ENCODE measurements at regions of chr17 and their contacts with region 1.

Region 1: DNA sequence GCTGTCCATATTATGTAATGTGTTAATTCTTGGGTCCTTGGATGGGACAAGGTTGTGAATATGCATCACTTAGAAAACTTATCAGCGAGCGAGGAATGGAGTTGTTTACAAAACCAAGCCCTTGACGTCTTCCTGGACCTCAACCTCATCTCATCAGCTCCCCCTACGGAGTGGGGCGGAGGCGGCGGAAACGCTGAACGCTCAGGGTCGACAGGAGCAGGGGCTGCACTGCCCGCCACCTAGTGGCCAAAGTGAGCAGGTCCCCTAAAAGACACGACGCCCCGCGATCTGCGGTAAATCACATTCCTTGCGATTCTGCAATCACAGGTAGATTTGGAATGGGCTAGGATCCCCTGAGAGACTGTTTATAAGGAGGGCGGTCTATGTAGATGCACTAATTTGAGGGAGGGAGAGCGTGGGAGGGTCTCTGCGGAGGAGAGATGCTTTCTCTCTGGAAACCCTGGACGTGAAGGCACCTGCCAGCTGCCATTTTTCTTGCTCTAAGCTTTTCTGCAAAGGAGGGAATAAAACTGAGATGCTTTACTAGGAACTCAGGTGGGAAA is 5.4 kb upstream of the ICAM2 start:
- DNase-seq: peak; percentile 92
- ATAC-seq: peak; percentile 97
- H3K4me3 Mint-ChIP-seq: peak overlapping the region; percentile 48
- H3K27ac Mint-ChIP-seq: no peak overlapping the region
- H3K4me1 Mint-ChIP-seq: peaks cover 3% of the 10 kb centered on the region; the same call in 1 of the 2 replicates
- H3K27me3 Mint-ChIP-seq: peaks cover 13% of the 10 kb centered on the region
- CTCF ChIP-seq: peak; percentile 96

Region 2: GRCh38 chr17:63919311-63919723 is 106.5 kb before region 1 on chr17:
- CTCF ChIA-PET with region 1: interaction called, 74 read pairs
- POLR2A ChIA-PET with region 1: interaction called, 3 read pairs
- DNase-seq: peak; percentile 81
- ATAC-seq: peak; percentile 95
- H3K4me3 Mint-ChIP-seq: peak overlapping the region; percentile 46; the same call in 1 of the 2 replicates
- H3K27ac Mint-ChIP-seq: no peak overlapping the region
- H3K4me1 Mint-ChIP-seq: peaks cover 16% of the 10 kb centered on the region
- H3K27me3 Mint-ChIP-seq: peaks cover 3% of the 10 kb centered on the region; the same call in 1 of the 2 replicates
- CTCF ChIP-seq: peak; percentile 97

Region 3: GRCh38 chr17:63984651-63985386 is 41.0 kb before region 1 on chr17:
- CTCF ChIA-PET with region 1: interaction called, 16 read pairs
- POLR2A ChIA-PET with region 1: no interaction called
- DNase-seq: no peak
- ATAC-seq: no peak
- H3K4me3 Mint-ChIP-seq: no peak overlapping the region
- H3K27ac Mint-ChIP-seq: no peak overlapping the region
- H3K4me1 Mint-ChIP-seq: peaks cover 15% of the 10 kb centered on the region
- H3K27me3 Mint-ChIP-seq: peaks cover 4% of the 10 kb centered on the region; the same call in 1 of the 2 replicates
- CTCF ChIP-seq: no peak

Region 4: GRCh38 chr17:64036198-64036922 is 10.5 kb after region 1 on chr17:
- CTCF ChIA-PET with region 1: interaction called, 30 read pairs
- POLR2A ChIA-PET with region 1: no interaction called
- DNase-seq: peak; percentile 60
- ATAC-seq: peak; percentile 99
- H3K4me3 Mint-ChIP-seq: no peak overlapping the region
- H3K27ac Mint-ChIP-seq: no peak overlapping the region
- H3K4me1 Mint-ChIP-seq: 0 out of 2 replicates have a peak, but pooled peaks cover 3% of the 10 kb centered on the region
- H3K27me3 Mint-ChIP-seq: no peaks in the 10 kb centered on the region
- CTCF ChIP-seq: no peak

Region 5: GRCh38 chr17:64129764-64130558 is 104.1 kb after region 1 on chr17 and contains the start of gene ERN1:
- CTCF ChIA-PET with region 1: interaction called, 380 read pairs
- POLR2A ChIA-PET with region 1: interaction called, 7 read pairs
- DNase-seq: peak; percentile 89
- ATAC-seq: peak; percentile 89
- H3K4me3 Mint-ChIP-seq: peak within 1 kb of the TSS; percentile 66
- H3K27ac Mint-ChIP-seq: no peak within 1 kb of the TSS
- H3K4me1 Mint-ChIP-seq: peaks cover 13% of the 10 kb centered on the region
- H3K27me3 Mint-ChIP-seq: peaks cover 37% of the 10 kb centered on the region
- CTCF ChIP-seq: no peak
- total RNA-seq, gene ERN1: 6.5 to 8.6 TPM (median 7.6 TPM) in 3 replicates

Region 6: DNA sequence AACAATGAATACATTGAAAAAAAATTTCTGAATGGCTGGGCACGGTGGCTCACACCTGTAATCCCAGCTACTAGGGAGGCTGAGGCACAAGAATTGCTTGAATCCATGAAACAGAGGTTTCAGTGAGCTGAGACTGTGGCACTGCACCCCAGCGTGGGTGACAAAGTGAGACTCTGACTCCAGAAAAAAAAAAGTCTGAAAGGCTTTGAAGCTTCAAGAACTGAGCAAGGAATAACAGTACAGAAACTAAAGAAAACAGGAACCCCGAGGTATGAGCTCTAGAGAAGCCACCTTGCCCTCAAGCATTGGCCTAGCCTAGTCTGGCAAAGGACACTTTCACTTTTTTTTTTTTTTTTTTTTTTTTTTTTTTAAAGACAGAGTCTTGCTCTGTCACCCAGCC is 192.3 kb after region 1 on chr17:
- CTCF ChIA-PET with region 1: no interaction called
- POLR2A ChIA-PET with region 1: no interaction called
- DNase-seq: no peak
- ATAC-seq: no peak
- H3K4me3 Mint-ChIP-seq: no peak overlapping the region
- H3K27ac Mint-ChIP-seq: no peak overlapping the region
- H3K4me1 Mint-ChIP-seq: peaks cover 16% of the 10 kb centered on the region
- H3K27me3 Mint-ChIP-seq: no peaks in the 10 kb centered on the region
- CTCF ChIP-seq: no peak

Region 7: DNA sequence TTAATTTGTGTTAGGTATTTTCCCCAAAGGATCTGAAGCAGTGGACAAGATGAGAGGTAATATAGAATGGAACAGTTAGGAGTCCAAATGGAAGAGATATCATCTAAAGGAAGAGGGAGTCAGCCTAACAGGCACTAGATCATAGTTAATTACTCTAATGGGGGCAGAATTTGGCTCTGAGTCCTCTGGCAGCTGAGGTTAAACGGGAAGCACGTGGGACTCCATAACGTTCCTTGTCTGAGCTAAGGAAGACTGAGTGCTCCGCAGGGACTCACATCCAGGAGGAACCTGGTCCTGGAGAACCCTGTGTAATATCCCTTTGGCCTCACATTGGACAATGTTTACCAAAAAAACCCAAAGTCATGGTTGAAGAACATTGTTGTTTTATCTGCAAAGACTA is 283.9 kb after region 1 on chr17:
- CTCF ChIA-PET with region 1: no interaction called
- POLR2A ChIA-PET with region 1: no interaction called
- DNase-seq: no peak
- ATAC-seq: no peak
- H3K4me3 Mint-ChIP-seq: no peak overlapping the region
- H3K27ac Mint-ChIP-seq: no peak overlapping the region
- H3K4me1 Mint-ChIP-seq: no peaks in the 10 kb centered on the region
- H3K27me3 Mint-ChIP-seq: no peaks in the 10 kb centered on the region
- CTCF ChIP-seq: no peak